MCF 10A (cell line): ENCODE measurements at regions of chr5 and their contacts with region 1.

Region 1: DNA sequence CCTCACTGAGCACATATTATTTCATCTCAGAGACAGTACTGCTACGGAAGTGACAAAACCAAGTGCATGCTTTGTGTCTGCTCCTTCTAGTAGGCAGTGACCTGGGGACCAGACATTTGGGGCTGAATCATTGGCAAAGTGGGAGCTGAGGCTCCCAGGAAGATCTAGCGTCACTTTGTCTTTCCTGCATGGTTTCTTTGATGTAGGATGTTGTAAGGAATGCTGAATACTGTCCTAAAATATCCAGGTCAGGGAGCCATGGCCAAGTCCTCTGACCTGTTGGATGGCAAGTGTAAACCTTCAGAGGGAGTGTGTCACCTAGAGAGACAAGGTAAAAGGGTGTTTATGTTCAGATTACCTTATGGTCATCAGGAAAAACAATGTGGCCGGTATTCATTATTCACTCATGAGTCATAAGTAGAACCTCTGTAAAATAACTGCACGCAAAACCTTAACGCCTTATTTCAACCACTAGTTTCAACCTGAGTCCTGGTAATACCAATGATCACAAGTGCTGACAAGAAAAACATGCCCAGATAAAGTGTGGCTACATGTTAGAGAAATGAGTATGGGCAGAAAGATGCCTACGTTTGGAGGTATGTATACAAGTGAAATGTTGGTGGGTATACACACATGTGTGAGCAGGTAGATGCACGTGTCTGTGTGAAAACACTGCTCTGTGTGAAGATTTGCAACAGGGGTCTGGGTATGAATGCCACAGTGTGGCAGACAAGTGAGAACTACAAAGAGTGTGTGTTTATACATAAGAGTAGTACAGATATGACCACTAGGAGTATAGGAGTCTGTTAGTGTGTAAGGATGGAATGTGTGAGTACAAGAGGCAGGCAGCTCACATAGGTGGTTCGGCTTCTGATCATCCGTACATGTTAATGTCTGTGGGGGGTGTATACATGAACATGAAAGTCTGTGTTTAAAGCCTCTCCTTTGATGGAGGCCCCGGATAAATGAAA is 263.9 kb downstream of the SPOCK1 start:
- DNase-seq: peak; percentile 68
- H3K4me3 Mint-ChIP-seq: no peak overlapping the region
- H3K27ac Mint-ChIP-seq: peak overlapping the region; percentile 53
- H3K4me1 Mint-ChIP-seq: peaks cover 26% of the 10 kb centered on the region
- H3K27me3 Mint-ChIP-seq: no peaks in the 10 kb centered on the region
- CTCF ChIP-seq: no peak

Region 2: DNA sequence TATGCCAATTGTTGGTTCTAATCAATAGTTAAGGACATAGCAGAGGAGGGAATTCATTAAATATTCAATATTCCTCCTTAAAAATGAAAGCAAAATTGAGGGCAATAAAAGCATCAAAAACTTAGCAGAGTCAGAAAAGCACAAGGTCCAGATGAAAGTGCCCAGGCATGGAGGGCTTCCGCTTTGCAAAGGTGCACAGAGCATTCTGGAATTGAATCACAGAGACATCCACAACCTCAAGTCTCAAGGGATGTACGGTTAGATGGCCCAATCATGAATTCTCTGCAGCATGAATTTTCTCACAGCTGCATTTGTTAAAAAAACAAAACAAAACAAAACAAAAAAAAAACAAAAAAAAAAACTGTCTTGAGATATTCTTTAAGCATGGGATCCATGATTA is 10.2 kb after region 1 on chr5:
- CTCF ChIA-PET with region 1: interaction called, 14 read pairs
- POLR2A ChIA-PET with region 1: interaction called, 5 read pairs
- intact Hi-C with region 1: no loop called
- DNase-seq: no peak
- H3K4me3 Mint-ChIP-seq: no peak overlapping the region
- H3K27ac Mint-ChIP-seq: no peak overlapping the region
- H3K4me1 Mint-ChIP-seq: no peaks in the 10 kb centered on the region
- H3K27me3 Mint-ChIP-seq: no peaks in the 10 kb centered on the region
- CTCF ChIP-seq: no peak